Activated CD4-positive, alpha-beta T cell treated with anti-CD3 and anti-CD28 coated beads for 36 hours (primary cell): ENCODE measurements at regions of chr18 and their contacts with region 1.

Region 1: DNA sequence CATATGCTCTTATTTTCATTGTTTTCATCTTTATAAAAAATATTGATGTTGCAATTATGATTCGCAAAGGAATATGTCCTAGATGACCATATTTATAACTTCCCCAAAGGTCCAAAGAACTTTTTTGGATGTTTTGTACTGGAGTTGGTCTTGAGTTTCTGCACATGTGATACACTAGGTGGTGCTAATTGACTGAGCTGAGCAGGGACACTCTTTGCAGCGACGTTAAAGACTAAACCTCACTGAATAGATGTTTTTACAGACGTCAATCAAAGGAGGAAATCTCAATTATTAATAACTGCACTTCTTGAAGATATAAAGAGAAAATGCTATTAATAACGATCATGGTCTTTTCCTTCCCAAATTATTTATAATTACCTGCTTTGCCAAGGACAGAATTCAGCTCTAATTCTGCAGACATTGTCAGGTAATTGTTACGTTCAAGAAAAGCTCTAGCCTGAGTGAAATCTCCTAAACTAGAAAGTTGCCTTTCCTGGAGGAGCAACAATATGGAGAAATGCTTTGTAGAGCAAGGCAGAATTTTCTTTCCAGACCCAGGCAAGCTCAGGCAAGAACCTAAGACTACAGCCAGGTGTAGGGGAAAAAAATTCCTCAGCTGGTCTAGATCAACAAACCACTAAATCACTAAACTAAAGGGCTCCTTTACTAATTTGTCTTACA is 119.3 kb upstream of the RBBP8 start:
- DNase-seq: peak; percentile 19
- ATAC-seq: no peak
- H3K4me3 Mint-ChIP-seq: no peak overlapping the region
- H3K27ac Mint-ChIP-seq: no peak overlapping the region
- H3K4me1 Mint-ChIP-seq: no peaks in the 10 kb centered on the region
- H3K27me3 Mint-ChIP-seq: peaks cover 21% of the 10 kb centered on the region

Region 2: DNA sequence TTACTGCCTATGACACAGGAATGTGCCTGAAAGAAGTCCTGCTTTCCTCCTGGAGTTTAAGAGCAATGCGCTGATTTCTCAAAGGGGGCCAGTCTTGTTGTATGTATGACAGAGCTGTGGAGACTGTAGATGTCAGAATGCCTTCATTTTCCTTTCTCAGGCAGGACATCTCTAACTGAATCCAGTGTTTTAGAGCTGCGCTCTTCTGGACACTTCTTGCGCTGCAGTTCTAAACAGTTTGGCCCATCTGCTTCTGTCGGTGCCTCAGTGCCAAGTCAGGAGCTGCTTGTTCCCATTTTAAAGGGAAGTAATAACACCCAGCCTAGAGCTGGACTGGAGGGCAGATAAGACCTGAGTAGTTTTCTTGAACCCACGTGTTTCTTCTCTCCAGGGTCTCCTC is 1304.7 kb before region 1 on chr18:
- CTCF ChIA-PET with region 1: no interaction called
- POLR2A ChIA-PET with region 1: no interaction called
- intact Hi-C with region 1: no loop called
- DNase-seq: no peak
- ATAC-seq: no peak
- H3K4me3 Mint-ChIP-seq: no peak overlapping the region
- H3K27ac Mint-ChIP-seq: no peak overlapping the region
- H3K4me1 Mint-ChIP-seq: no peaks in the 10 kb centered on the region
- H3K27me3 Mint-ChIP-seq: no peaks in the 10 kb centered on the region

Region 3: DNA sequence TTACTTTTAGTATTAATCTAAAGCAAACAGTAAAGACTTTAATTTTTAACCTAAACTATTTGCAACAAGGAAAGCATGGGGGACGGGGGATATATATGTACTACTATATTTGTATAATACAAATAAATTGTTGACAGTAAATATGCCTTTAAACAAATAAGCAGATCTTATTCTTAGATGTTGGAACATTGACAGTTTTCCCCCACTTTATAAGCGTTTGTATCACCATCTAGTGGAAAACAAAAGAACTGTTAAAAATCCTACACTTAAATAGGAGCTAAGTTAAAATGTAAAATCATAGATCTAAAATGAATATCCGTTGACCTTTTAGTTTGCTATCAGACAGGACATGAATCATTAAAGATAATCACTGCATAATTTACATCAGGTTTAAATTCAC is 169.4 kb after region 1 on chr18:
- CTCF ChIA-PET with region 1: interaction called, 8 read pairs
- POLR2A ChIA-PET with region 1: no interaction called
- intact Hi-C with region 1: loop called in 1 of 2 experiments (anchors 1 kb)
- DNase-seq: no peak
- ATAC-seq: no peak
- H3K4me3 Mint-ChIP-seq: no peak overlapping the region
- H3K27ac Mint-ChIP-seq: no peak overlapping the region
- H3K4me1 Mint-ChIP-seq: peaks cover 7% of the 10 kb centered on the region
- H3K27me3 Mint-ChIP-seq: no peaks in the 10 kb centered on the region